A673 (cell line): ENCODE measurements at regions of chr10 and their contacts with region 1.

Region 1: GRCh38 chr10:60444494-60445064 is 54.9 kb upstream of the ANK3 start:
- DNase-seq: peak; percentile 68
- H3K4me3 ChIP-seq: no peak overlapping the region
- H3K27ac ChIP-seq: no peak overlapping the region
- H3K4me1 ChIP-seq: peaks cover 25% of the 10 kb centered on the region
- H3K27me3 ChIP-seq: no peaks in the 10 kb centered on the region
- CTCF ChIP-seq: peak; percentile 79

Region 2: GRCh38 chr10:60541451-60541850 is 96.9 kb after region 1 on chr10:
- CTCF ChIA-PET with region 1: no interaction called
- POLR2A ChIA-PET with region 1: no interaction called
- intact Hi-C with region 1: loop called (anchors 5 kb)
- DNase-seq: no peak
- H3K4me3 ChIP-seq: no peak overlapping the region
- H3K27ac ChIP-seq: no peak overlapping the region
- H3K4me1 ChIP-seq: peaks cover 19% of the 10 kb centered on the region
- H3K27me3 ChIP-seq: no peaks in the 10 kb centered on the region
- CTCF ChIP-seq: no peak

Region 3: GRCh38 chr10:60652628-60653027 is 208.0 kb after region 1 on chr10:
- CTCF ChIA-PET with region 1: interaction called, 10 read pairs
- POLR2A ChIA-PET with region 1: no interaction called
- intact Hi-C with region 1: no loop called
- DNase-seq: no peak
- H3K4me3 ChIP-seq: no peak overlapping the region
- H3K27ac ChIP-seq: no peak overlapping the region
- H3K4me1 ChIP-seq: peaks cover 6% of the 10 kb centered on the region
- H3K27me3 ChIP-seq: no peaks in the 10 kb centered on the region
- CTCF ChIP-seq: no peak

Region 4: DNA sequence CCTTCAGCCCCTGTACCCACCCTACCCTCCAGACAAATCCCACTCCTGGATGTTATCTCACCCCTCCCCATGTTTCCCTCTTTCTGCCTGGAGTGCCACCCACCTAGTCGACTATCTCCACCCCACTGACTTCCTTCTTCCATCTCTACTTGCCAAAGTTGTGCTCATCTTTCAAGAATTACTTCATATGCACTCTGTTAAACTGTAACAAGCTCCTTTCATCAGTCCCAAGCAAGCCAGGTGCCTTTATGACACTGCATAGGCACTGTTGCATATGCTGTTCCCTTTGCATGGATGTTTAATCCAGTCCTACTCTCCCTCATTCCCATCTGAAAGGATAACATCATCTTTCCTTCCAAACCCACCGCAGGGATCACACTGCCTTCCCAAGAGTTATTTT is 324.8 kb after region 1 on chr10:
- CTCF ChIA-PET with region 1: no interaction called
- POLR2A ChIA-PET with region 1: no interaction called
- intact Hi-C with region 1: loop called (anchors 2 kb)
- DNase-seq: no peak
- H3K4me3 ChIP-seq: no peak overlapping the region
- H3K27ac ChIP-seq: no peak overlapping the region
- H3K4me1 ChIP-seq: peaks cover 6% of the 10 kb centered on the region
- H3K27me3 ChIP-seq: no peaks in the 10 kb centered on the region
- CTCF ChIP-seq: no peak